ENCODE measurements at regions of chr11 and their contacts with region 1.

Region 1: DNA sequence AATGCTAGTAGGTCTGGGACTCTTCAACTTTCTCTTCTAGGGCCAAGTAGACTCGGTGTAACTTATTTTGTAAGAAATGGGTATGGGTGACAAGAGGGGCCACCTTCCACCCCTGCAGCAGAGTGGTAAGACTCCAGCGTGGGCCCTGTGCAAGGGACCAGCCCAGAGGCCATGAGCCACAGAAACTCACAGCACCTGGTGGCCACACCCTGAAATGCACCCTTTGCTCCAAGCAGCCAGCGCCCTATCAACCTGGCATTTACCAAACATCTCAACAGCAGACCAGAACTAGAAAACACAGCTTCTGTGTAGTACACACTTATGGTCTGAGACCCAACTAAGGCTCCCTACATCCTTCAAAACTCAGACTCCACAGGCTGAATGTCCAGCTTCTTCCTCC is 5.7 kb downstream of the CDCA5 start:
- DNase-seq: peak in 6 of 7 donors; percentile 29 to 72 (median 60)
- H3K4me3 ChIP-seq: no peak overlapping the region
- H3K27ac ChIP-seq: no peak overlapping the region
- H3K4me1 ChIP-seq: peaks cover 0 to under 1% of the 10 kb centered on the region in 2 donors
- H3K27me3 ChIP-seq: no peaks in the 10 kb centered on the region
- CTCF ChIP-seq: peak; percentile 32 to 65 (median 53)
- POLR2A ChIP-seq: no peak

Region 2: GRCh38 chr11:64734811-64735724 is 343.1 kb before region 1 on chr11:
- intact Hi-C with region 1: no loop called
- DNase-seq: no peak
- H3K4me3 ChIP-seq: no peak overlapping the region
- H3K27ac ChIP-seq: no peak overlapping the region
- H3K4me1 ChIP-seq: no peaks in the 10 kb centered on the region
- H3K27me3 ChIP-seq: no peaks in the 10 kb centered on the region
- CTCF ChIP-seq: no peak
- POLR2A ChIP-seq: no peak

Region 3: DNA sequence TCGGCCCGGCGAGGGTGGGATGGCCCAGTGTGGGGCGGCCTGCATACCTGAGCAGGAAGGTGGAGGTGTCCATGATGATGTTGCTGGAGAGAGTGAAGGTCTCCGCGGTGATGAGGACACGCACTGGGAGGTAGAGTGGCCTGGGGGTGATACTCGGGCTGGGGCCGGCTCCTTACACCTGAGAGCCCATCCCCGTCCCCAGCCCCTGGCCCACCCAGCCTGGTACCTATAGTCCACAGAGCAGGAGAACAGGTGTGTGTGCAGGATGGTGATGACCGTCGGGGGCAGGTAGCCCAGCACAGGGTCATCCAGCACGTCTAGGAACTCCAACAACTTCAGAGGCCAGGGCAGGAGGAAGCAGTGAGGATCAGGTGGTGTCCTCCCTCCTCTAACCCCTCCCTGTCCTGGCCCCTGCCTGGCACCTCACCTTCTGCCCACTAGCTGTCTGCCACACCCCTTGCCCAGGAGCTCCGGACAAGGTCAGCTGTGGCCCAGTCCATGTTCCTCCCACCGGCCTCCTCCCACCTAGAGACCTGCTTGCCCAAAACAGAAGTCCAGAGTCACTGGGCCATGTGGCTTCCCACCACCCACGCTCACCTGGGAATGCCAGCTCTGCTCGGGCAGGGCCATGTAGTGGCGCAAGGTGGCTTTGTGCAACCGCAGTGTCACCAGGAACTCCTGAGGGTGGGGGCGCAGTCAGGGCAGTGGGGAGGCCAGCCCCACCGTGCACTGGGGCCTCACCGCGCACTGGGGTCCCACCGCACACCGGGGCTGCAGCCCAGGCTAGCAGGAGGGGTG is 172.4 kb before region 1 on chr11:
- intact Hi-C with region 1: no loop called
- DNase-seq: no peak
- H3K4me3 ChIP-seq: no peak overlapping the region
- H3K27ac ChIP-seq: no peak overlapping the region
- H3K4me1 ChIP-seq: no peaks in the 10 kb centered on the region
- H3K27me3 ChIP-seq: no peaks in the 10 kb centered on the region
- CTCF ChIP-seq: no peak
- POLR2A ChIP-seq: no peak

Region 4: GRCh38 chr11:65013692-65014145 is 64.4 kb before region 1 on chr11:
- intact Hi-C with region 1: loop called in 1 of 2 experiments (anchors 10 kb)
- DNase-seq: peak; percentile 88 to 93 (median 91)
- H3K4me3 ChIP-seq: peak overlapping the region in 3 of 4 donors; percentile 42 to 76 (median 55)
- H3K27ac ChIP-seq: peak overlapping the region; percentile 95 to 100 (median 98)
- H3K4me1 ChIP-seq: peaks cover 12 to 17% of the 10 kb centered on the region in 2 donors
- H3K27me3 ChIP-seq: no peaks in the 10 kb centered on the region
- CTCF ChIP-seq: peak in 4 of 6 experiments; percentile 55 to 93 (median 89)
- POLR2A ChIP-seq: peak; percentile 70 to 86

Region 5: GRCh38 chr11:65181569-65182257 is 103.6 kb after region 1 on chr11 and contains the start of gene CAPN1:
- intact Hi-C with region 1: no loop called
- DNase-seq: peak; percentile 86 to 94 (median 92)
- H3K4me3 ChIP-seq: peak within 1 kb of the TSS; percentile 56 to 100 (median 70)
- H3K27ac ChIP-seq: peak within 1 kb of the TSS in 4 of 5 donors; percentile 58 to 96 (median 81)
- H3K4me1 ChIP-seq: peaks cover 12 to 22% of the 10 kb centered on the region in 2 donors
- H3K27me3 ChIP-seq: no peaks in the 10 kb centered on the region
- CTCF ChIP-seq: no peak
- POLR2A ChIP-seq: no peak
- total RNA-seq, gene CAPN1: 20.6 to 333 (median 141) TPM

Measured in adrenal gland (tissue), 19 donors.